ENCODE measurements at regions of chr3 and their contacts with region 1.

Region 1: DNA sequence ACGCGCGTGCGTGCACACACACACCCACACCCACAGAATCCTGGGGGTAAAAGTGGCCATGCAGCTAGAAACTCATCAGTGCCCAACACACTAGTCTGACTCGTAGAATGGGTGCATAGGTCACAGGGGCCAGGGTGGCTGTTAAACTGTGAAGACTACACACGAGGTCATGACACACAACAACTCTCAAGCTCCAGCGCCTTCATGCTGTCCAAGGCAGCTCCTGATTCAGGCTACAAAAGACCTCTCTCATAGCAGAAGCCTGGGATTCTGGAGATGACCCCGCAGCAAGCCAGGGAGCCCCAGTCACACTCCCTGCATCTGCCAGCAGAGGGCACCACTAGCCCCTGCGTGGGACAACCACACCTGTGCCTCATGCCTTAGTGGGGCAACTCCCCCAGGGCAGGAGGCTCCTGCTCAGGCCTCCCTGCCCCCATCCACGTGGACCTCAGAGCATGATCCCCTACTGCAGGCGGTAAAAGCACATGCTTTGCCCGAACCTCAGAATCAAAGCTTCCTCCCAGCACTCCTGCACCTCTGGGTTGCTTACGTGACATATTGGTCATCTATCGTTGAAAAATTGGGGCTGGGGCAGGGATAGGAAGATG is 93.1 kb downstream of the LRIG1 start:
- DNase-seq: peak; percentile 69
- H3K4me3 Mint-ChIP-seq: no peak overlapping the region
- H3K27ac Mint-ChIP-seq: no peak overlapping the region
- H3K4me1 Mint-ChIP-seq: no peaks in the 10 kb centered on the region
- H3K27me3 Mint-ChIP-seq: no peaks in the 10 kb centered on the region
- CTCF ChIP-seq: peak; percentile 94

Region 2: DNA sequence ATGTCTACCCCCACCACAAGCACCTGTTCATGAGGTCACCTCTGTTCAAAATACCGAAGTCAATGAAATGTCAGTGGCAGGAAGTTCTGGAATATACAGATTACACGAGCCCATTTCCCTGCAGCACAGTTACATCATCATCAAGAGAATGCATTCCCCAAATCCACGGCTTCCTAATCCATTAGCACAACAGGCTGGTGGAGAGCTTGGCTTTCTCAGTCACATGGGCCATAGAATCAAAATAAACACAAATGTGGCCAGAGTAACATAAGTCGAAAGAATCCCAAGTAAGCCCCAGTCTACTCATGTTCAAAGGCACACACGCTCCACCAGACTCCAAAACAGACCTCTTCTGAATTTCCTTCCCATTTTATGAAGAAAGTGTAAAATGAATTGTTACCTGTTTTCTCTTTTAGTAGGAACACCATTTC is 788.2 kb before region 1 on chr3:
- CTCF ChIA-PET with region 1: no interaction called
- POLR2A ChIA-PET with region 1: no interaction called
- intact Hi-C with region 1: no loop called
- DNase-seq: no peak
- H3K4me3 Mint-ChIP-seq: no peak overlapping the region
- H3K27ac Mint-ChIP-seq: no peak overlapping the region
- H3K4me1 Mint-ChIP-seq: no peaks in the 10 kb centered on the region
- H3K27me3 Mint-ChIP-seq: no peaks in the 10 kb centered on the region
- CTCF ChIP-seq: no peak

Region 3: DNA sequence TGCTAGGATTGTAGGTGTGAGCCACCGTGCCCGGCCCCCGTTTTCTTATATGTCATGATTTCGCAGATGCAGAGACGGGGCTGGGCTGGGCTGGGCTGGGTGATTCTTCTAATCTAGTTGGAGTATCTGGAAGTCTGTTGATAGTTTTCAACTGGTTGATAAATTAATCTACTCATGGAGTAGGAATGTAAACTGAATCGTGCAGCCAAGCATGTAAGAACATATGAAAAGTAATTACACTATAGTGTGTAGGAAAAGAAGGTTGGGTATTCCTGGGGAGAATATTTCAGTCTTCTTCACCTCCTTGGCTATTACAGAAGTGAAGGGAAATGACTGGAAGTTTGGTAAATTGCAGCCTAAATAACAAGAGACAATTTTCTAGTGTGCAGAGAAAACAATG is 286.4 kb before region 1 on chr3:
- CTCF ChIA-PET with region 1: no interaction called
- POLR2A ChIA-PET with region 1: no interaction called
- intact Hi-C with region 1: no loop called
- DNase-seq: no peak
- H3K4me3 Mint-ChIP-seq: no peak overlapping the region
- H3K27ac Mint-ChIP-seq: no peak overlapping the region
- H3K4me1 Mint-ChIP-seq: peaks cover 4% of the 10 kb centered on the region
- H3K27me3 Mint-ChIP-seq: no peaks in the 10 kb centered on the region
- CTCF ChIP-seq: no peak

Region 4: GRCh38 chr3:66253790-66254620 is 153.7 kb before region 1 on chr3:
- CTCF ChIA-PET with region 1: interaction called, 16 read pairs
- POLR2A ChIA-PET with region 1: no interaction called
- intact Hi-C with region 1: no loop called
- DNase-seq: peak; percentile 49
- H3K4me3 Mint-ChIP-seq: no peak overlapping the region
- H3K27ac Mint-ChIP-seq: no peak overlapping the region
- H3K4me1 Mint-ChIP-seq: no peaks in the 10 kb centered on the region
- H3K27me3 Mint-ChIP-seq: no peaks in the 10 kb centered on the region
- CTCF ChIP-seq: peak; percentile 59

Region 5: GRCh38 chr3:66386925-66387650 is 20.6 kb before region 1 on chr3:
- CTCF ChIA-PET with region 1: interaction called, 22 read pairs
- POLR2A ChIA-PET with region 1: no interaction called
- intact Hi-C with region 1: no loop called
- DNase-seq: no peak
- H3K4me3 Mint-ChIP-seq: no peak overlapping the region
- H3K27ac Mint-ChIP-seq: no peak overlapping the region
- H3K4me1 Mint-ChIP-seq: no peaks in the 10 kb centered on the region
- H3K27me3 Mint-ChIP-seq: no peaks in the 10 kb centered on the region
- CTCF ChIP-seq: no peak

Region 6: GRCh38 chr3:66428733-66429132 is 21.0 kb after region 1 on chr3:
- CTCF ChIA-PET with region 1: interaction called, 17 read pairs
- POLR2A ChIA-PET with region 1: no interaction called
- intact Hi-C with region 1: loop called (anchors 1 kb)
- DNase-seq: peak; percentile 97
- H3K4me3 Mint-ChIP-seq: peak overlapping the region; percentile 62
- H3K27ac Mint-ChIP-seq: peak overlapping the region; percentile 93
- H3K4me1 Mint-ChIP-seq: peaks cover 49% of the 10 kb centered on the region
- H3K27me3 Mint-ChIP-seq: no peaks in the 10 kb centered on the region
- CTCF ChIP-seq: no peak

Region 7: GRCh38 chr3:66500576-66501482 is 93.1 kb after region 1 on chr3 and contains the start of gene LRIG1:
- CTCF ChIA-PET with region 1: interaction called, 10 read pairs
- POLR2A ChIA-PET with region 1: no interaction called
- intact Hi-C with region 1: loop called (anchors 1 kb)
- DNase-seq: peak; percentile 98
- H3K4me3 Mint-ChIP-seq: peak within 1 kb of the TSS; percentile 79
- H3K27ac Mint-ChIP-seq: no peak within 1 kb of the TSS
- H3K4me1 Mint-ChIP-seq: peaks cover 33% of the 10 kb centered on the region
- H3K27me3 Mint-ChIP-seq: no peaks in the 10 kb centered on the region
- CTCF ChIP-seq: no peak
- total RNA-seq, gene LRIG1: 15.2 and 17.2 TPM in 2 replicates

Region 8: DNA sequence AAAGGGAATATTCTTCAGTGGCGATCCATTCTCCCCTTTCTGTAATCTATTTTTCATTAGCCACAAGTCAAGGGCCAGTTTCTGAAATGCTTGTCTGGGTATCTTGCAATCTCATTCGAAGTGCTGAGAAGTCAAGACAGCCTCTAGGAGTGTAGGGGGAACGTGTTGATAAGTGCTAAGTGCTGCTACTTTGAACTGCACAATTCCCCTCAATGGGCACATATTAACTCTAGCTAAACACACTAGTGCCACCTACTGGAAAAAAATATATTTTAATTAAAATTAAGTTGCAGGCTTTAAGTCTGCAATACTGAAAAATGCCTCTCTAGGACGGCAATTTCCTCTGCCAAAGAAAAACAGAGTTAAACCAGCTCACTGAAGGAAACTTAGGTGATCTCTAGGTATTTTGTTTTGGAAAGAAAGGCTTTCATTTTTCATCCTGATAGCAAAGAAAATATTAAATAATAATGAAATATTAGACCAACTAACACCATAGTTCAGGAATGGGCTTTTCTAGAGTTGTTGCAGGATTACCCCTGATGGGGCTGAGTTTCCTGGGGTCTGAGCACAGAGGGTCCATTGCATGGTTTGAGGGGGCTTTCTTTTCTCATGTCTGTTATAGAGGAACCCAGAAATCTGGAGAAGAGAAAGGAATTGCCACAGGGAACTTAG is 408.5 kb after region 1 on chr3:
- CTCF ChIA-PET with region 1: interaction called, 604 read pairs
- POLR2A ChIA-PET with region 1: interaction called, 3 read pairs
- intact Hi-C with region 1: loop called (anchors 1 kb)
- DNase-seq: peak; percentile 57
- H3K4me3 Mint-ChIP-seq: no peak overlapping the region
- H3K27ac Mint-ChIP-seq: no peak overlapping the region
- H3K4me1 Mint-ChIP-seq: peaks cover 7% of the 10 kb centered on the region
- H3K27me3 Mint-ChIP-seq: peaks cover 11% of the 10 kb centered on the region
- CTCF ChIP-seq: peak; percentile 51